Endothelial cell of umbilical vein (primary cell): ENCODE measurements at regions of chr18 and their contacts with region 1.

Region 1: GRCh38 chr18:3245853-3246634 is 1.6 kb upstream of the MYL12A start:
- DNase-seq: peak; percentile 91
- H3K4me3 ChIP-seq: peak overlapping the region; percentile 26 to 75 (median 66)
- H3K27ac ChIP-seq: peak overlapping the region; percentile 83
- H3K4me1 ChIP-seq: peaks cover 26% of the 10 kb centered on the region
- H3K27me3 ChIP-seq: no peaks in the 10 kb centered on the region
- CTCF ChIP-seq: peak; percentile 96
- POLR2A ChIP-seq: no peak

Region 2: GRCh38 chr18:2515908-2516625 is 730.0 kb before region 1 on chr18:
- CTCF ChIA-PET with region 1: no interaction called
- POLR2A ChIA-PET with region 1: no interaction called
- dilution Hi-C with region 1: no loop called
- intact Hi-C with region 1: loop called (anchors 1 kb)
- DNase-seq: peak; percentile 96
- H3K4me3 ChIP-seq: no peak overlapping the region
- H3K27ac ChIP-seq: peak overlapping the region; percentile 100
- H3K4me1 ChIP-seq: peaks cover 26% of the 10 kb centered on the region
- H3K27me3 ChIP-seq: no peaks in the 10 kb centered on the region
- CTCF ChIP-seq: no peak
- POLR2A ChIP-seq: peak; percentile 66

Region 3: GRCh38 chr18:2776601-2777000 is 469.4 kb before region 1 on chr18:
- CTCF ChIA-PET with region 1: interaction called, 4 read pairs
- POLR2A ChIA-PET with region 1: no interaction called
- dilution Hi-C with region 1: no loop called
- intact Hi-C with region 1: loop called (anchors 1 kb)
- DNase-seq: peak; percentile 92
- H3K4me3 ChIP-seq: no peak overlapping the region
- H3K27ac ChIP-seq: peak overlapping the region; percentile 71
- H3K4me1 ChIP-seq: peaks cover 7% of the 10 kb centered on the region
- H3K27me3 ChIP-seq: no peaks in the 10 kb centered on the region
- CTCF ChIP-seq: no peak
- POLR2A ChIP-seq: peak; percentile 41

Region 4: DNA sequence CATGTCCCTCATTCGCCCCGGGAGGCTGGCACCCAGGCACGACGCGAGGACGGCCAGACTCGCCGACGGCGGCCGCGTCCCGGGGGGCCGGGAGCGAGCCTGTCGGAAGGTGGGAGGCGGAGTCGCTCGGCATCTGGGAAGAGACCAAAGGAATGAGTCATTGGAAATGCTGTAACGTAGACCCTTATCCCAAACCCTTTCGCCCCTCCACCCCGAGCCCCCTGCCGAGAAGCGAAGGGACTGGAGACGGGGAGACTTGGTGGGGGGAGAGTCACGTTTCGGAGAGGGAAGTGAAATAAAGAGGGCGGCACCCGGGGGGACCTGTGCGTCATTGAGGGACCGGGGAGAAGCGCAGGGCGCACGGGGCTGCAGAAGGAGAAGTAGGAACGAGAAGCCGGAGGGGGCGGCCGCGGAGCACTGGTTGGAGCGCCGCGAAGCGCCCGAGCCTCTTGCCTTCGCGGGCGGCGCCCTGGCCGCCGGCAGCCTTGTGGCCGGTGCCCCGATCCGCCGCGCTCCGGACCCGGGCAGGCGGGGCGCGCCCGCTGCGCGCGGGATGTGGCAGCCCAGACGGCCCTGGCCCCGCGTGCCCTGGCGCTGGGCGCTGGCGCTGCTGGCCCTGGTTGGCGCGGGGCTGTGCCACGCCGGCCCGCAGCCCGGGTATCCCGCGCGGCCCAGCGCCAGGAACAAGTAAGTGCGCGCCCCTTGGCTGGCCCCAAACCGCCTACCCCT is 399.2 kb before region 1 on chr18 and contains the start of gene EMILIN2:
- CTCF ChIA-PET with region 1: no interaction called
- POLR2A ChIA-PET with region 1: no interaction called
- dilution Hi-C with region 1: no loop called
- intact Hi-C with region 1: no loop called
- DNase-seq: peak; percentile 18
- H3K4me3 ChIP-seq: peak within 1 kb of the TSS; percentile 22 to 34 (median 30)
- H3K27ac ChIP-seq: no peak within 1 kb of the TSS
- H3K4me1 ChIP-seq: peaks cover 19% of the 10 kb centered on the region
- H3K27me3 ChIP-seq: peaks cover 37 to 71% of the 10 kb centered on the region in 2 experiments
- CTCF ChIP-seq: no peak
- POLR2A ChIP-seq: no peak
- total RNA-seq, gene EMILIN2: 11.3 and 13.4 TPM in 2 replicates

Region 5: DNA sequence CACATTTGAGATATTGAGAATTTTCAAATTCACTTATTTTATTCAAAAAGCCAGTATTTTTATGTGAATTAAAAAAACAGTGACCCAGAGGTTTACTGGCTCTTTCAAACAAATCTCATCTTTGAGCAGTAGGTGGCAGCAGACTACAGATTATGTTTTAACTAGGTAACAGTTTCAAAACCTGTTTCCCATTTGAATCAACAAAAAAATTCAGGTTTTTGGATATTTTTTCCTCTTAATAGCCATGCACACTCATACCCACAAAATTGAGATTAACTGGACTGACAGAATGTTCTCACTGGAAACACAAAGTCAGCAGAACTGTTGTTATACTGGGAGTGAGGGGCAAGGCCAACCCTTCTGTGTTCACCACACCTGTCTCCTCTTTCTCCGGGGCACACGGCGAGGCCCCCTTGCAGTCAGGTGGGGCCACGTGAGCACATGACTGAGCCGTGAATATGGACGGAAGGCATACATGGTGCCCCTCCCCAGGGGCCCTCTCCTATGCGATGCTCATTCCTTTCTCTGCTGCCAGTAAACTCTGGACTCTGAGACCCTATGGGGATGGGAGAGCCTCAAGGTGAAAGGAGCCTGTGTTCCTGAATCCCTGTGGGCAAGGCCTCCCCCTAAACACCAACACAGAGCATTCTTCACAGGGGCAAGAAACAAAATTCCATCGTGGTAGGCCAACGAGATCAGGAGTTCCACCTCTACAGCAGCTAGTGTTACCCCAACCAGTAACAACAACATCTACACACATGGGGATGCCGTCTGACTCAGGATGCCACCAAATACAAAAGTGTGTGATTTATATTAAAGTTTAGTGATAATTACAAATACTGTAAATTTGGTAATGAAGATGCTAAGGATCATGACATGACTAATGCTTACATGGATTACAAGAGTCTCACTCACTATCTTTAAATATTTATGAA is 313.5 kb before region 1 on chr18:
- CTCF ChIA-PET with region 1: interaction called, 50 read pairs
- POLR2A ChIA-PET with region 1: no interaction called
- dilution Hi-C with region 1: no loop called
- intact Hi-C with region 1: loop called (anchors 1 kb)
- DNase-seq: peak; percentile 64
- H3K4me3 ChIP-seq: no peak overlapping the region
- H3K27ac ChIP-seq: no peak overlapping the region
- H3K4me1 ChIP-seq: no peaks in the 10 kb centered on the region
- H3K27me3 ChIP-seq: no peaks in the 10 kb centered on the region
- CTCF ChIP-seq: peak; percentile 44 to 48
- POLR2A ChIP-seq: no peak

Region 6: GRCh38 chr18:3062798-3063680 is 183.0 kb before region 1 on chr18:
- CTCF ChIA-PET with region 1: interaction called, 21 read pairs
- POLR2A ChIA-PET with region 1: no interaction called
- dilution Hi-C with region 1: no loop called
- intact Hi-C with region 1: no loop called
- DNase-seq: peak; percentile 46
- H3K4me3 ChIP-seq: no peak overlapping the region
- H3K27ac ChIP-seq: no peak overlapping the region
- H3K4me1 ChIP-seq: peaks cover 8% of the 10 kb centered on the region
- H3K27me3 ChIP-seq: no peaks in the 10 kb centered on the region
- CTCF ChIP-seq: peak; percentile 70 to 82
- POLR2A ChIP-seq: no peak

Region 7: GRCh38 chr18:3151399-3152264 is 94.4 kb before region 1 on chr18:
- CTCF ChIA-PET with region 1: interaction called, 54 read pairs
- POLR2A ChIA-PET with region 1: interaction called, 4 read pairs
- dilution Hi-C with region 1: no loop called
- intact Hi-C with region 1: loop called (anchors 1 kb)
- DNase-seq: peak; percentile 35
- H3K4me3 ChIP-seq: no peak overlapping the region
- H3K27ac ChIP-seq: no peak overlapping the region
- H3K4me1 ChIP-seq: peaks cover 12% of the 10 kb centered on the region
- H3K27me3 ChIP-seq: no peaks in the 10 kb centered on the region
- CTCF ChIP-seq: peak; percentile 54
- POLR2A ChIP-seq: no peak

Region 8: DNA sequence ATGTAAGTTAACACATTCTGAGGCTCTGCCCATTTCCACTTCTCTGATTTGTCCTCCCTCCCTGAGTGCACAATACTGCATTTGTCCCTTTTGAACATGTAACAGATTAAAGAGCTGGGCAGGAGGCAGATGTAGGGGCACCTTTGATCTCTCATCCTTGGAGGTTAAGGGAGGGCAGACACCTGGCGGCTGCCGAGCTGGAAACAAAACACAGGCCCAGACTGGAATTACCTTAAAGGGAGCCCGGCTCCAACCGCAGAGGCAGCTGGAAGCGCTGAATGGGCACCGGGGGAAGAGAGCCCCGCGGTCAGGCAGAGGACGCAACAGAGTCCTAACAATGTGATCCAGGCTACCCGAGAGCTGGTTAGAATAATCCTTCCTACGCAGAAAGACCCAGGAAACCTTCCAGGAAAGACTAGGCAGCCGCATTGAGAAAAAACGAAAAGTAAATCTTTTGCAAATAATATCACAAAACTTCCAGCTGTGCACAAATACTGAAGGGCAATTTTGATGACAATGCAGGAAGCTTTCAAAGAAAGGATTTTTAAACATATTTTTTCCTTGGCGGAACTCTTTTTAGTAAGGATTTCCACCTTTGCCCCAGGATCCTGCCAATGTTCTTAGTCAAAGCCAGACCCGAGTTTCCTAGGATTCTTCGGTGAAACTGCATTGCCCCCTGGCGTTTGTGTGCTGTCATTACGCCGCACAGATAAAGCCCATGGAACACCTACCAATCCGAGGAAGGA is 419.9 kb after region 1 on chr18:
- CTCF ChIA-PET with region 1: interaction called, 25 read pairs
- POLR2A ChIA-PET with region 1: interaction called, 3 read pairs
- dilution Hi-C with region 1: no loop called
- intact Hi-C with region 1: loop called (anchors 1 kb)
- DNase-seq: peak; percentile 90
- H3K4me3 ChIP-seq: peak overlapping the region in 1 of 3 experiments; percentile 34
- H3K27ac ChIP-seq: peak overlapping the region; percentile 90
- H3K4me1 ChIP-seq: peaks cover 16% of the 10 kb centered on the region
- H3K27me3 ChIP-seq: no peaks in the 10 kb centered on the region
- CTCF ChIP-seq: peak; percentile 86 to 91
- POLR2A ChIP-seq: no peak